Adrenal gland (tissue), 19 donors: ENCODE measurements at regions of chrX and their contacts with region 1.

Region 1: GRCh38 chrX:72126539-72127140 is 5.1 kb downstream of the RTL5 start:
- DNase-seq: peak; percentile 77 to 95 (median 84)
- H3K4me3 ChIP-seq: no peak overlapping the region
- H3K27ac ChIP-seq: peak overlapping the region in 1 of 5 donors; percentile 45
- H3K4me1 ChIP-seq: peaks cover 0 to 5% of the 10 kb centered on the region in 2 donors
- H3K27me3 ChIP-seq: peaks cover 10% of the 10 kb centered on the region
- CTCF ChIP-seq: peak; percentile 74 to 87 (median 80)
- POLR2A ChIP-seq: no peak

Region 2: DNA sequence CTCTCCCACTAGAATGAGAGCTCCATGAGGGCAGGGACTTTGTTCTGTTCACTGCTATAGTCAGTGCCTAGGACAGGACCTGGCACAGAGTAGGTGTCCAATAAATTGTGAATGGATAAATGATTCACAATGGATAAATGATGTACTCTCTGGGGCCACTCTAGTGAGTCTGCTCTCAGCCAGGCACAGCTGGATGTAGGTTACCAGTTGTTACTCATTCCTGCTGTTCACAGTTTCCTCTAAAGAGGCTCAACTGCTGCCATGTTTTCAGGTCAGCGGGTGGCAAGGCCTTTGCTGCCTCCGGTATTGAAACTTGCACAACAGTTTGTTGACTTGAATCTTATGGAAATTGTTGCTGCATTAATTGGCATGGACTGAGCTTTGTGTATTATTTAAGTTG is 116.9 kb before region 1 on chrX:
- intact Hi-C with region 1: loop called in 1 of 2 experiments (anchors 5 kb)
- DNase-seq: peak in 1 of 7 donors; percentile 1
- H3K4me3 ChIP-seq: no peak overlapping the region
- H3K27ac ChIP-seq: no peak overlapping the region
- H3K4me1 ChIP-seq: no peaks in the 10 kb centered on the region
- H3K27me3 ChIP-seq: peaks cover 4% of the 10 kb centered on the region
- CTCF ChIP-seq: no peak
- POLR2A ChIP-seq: no peak

Region 3: GRCh38 chrX:72021975-72022374 is 104.7 kb before region 1 on chrX:
- intact Hi-C with region 1: loop called (anchors 5 kb)
- DNase-seq: peak in 2 of 7 donors; percentile 8 to 16
- H3K4me3 ChIP-seq: no peak overlapping the region
- H3K27ac ChIP-seq: no peak overlapping the region
- H3K4me1 ChIP-seq: peaks cover 0 to 7% of the 10 kb centered on the region in 2 donors
- H3K27me3 ChIP-seq: peaks cover 42% of the 10 kb centered on the region
- CTCF ChIP-seq: peak in 5 of 6 experiments; percentile 10 to 40 (median 21)
- POLR2A ChIP-seq: no peak